ENCODE measurements at regions of chr19 and their contacts with region 1.

Region 1: GRCh38 chr19:3984908-3985642 is at the start of gene EEF2:
- DNase-seq: peak in 1 of 2 donors; percentile 92
- H3K4me3 ChIP-seq: peak within 1 kb of the TSS; percentile 89 to 96
- H3K27ac ChIP-seq: peak within 1 kb of the TSS; percentile 98
- H3K4me1 ChIP-seq: peaks cover 8 to 27% of the 10 kb centered on the region in 2 donors
- H3K27me3 ChIP-seq: no peaks in the 10 kb centered on the region
- CTCF ChIP-seq: no peak
- total RNA-seq, gene EEF2: 1,544 TPM

Region 2: GRCh38 chr19:3970808-3971598 is 14.1 kb before region 1 on chr19 and contains the start of gene DAPK3:
- intact Hi-C with region 1: loop called (anchors 1 kb)
- DNase-seq: peak; percentile 89 to 98
- H3K4me3 ChIP-seq: peak within 1 kb of the TSS; percentile 78 to 98
- H3K27ac ChIP-seq: peak within 1 kb of the TSS; percentile 99 to 100
- H3K4me1 ChIP-seq: peaks cover 28 to 33% of the 10 kb centered on the region in 2 donors
- H3K27me3 ChIP-seq: no peaks in the 10 kb centered on the region
- CTCF ChIP-seq: no peak
- total RNA-seq, gene DAPK3: 135 TPM

Region 3: DNA sequence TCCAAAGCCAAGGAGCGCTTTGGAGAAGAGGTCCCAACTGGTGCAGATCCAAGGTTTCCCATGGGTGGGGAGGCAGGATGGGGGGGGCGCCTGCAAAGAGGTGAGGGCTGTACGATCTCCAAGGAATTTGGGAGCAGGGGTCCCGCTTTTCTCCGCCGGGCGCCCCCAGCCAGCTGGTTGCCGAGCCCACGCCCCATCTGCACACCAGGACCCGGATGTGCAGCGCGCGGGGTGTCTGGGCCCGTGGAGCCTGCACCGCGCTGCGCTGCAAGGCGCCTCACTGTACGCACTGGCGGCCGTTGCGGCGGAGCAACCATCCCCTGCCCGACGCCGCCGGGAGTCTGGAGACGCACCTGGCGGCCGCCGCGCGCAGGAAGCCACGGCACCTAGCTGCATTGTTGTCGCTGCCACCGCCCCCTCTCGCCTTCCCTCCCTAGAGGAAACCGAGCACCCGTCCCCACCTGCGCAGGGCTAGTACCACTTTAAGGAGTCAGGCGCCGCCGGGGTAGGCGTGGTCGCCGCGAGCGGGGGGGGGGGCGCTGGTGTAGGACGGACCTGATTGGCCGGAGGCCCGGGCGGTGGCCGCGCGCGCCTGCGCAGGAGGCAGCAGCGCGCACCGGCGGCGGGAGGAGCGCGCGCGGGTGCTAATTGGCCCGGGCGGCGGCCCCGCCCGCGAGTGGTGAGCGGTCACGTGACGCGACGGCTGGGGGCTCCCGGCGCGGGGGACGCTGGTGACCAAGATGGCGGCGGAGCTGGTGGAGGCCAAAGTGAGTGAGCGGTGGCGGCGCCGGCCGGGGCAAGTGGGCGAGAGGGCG is 22.2 kb after region 1 on chr19 and contains the start of gene PIAS4:
- intact Hi-C with region 1: loop called (anchors 1 kb)
- DNase-seq: peak; percentile 86 to 97
- H3K4me3 ChIP-seq: peak within 1 kb of the TSS; percentile 95 to 96
- H3K27ac ChIP-seq: peak within 1 kb of the TSS; percentile 66 to 67
- H3K4me1 ChIP-seq: peaks cover 5 to 29% of the 10 kb centered on the region in 2 donors
- H3K27me3 ChIP-seq: no peaks in the 10 kb centered on the region
- CTCF ChIP-seq: peak in 1 of 3 experiments; percentile 19
- total RNA-seq, gene PIAS4: 30.8 TPM

Region 4: GRCh38 chr19:4065430-4066175 is 80.5 kb after region 1 on chr19:
- intact Hi-C with region 1: loop called (anchors 1 kb)
- DNase-seq: peak; percentile 77 to 98
- H3K4me3 ChIP-seq: peak overlapping the region; percentile 92 to 98
- H3K27ac ChIP-seq: peak overlapping the region; percentile 78 to 90
- H3K4me1 ChIP-seq: peaks cover 31 to 34% of the 10 kb centered on the region in 2 donors
- H3K27me3 ChIP-seq: no peaks in the 10 kb centered on the region
- CTCF ChIP-seq: no peak

Region 5: GRCh38 chr19:4123615-4124568 is 138.8 kb after region 1 on chr19 and contains the start of gene MAP2K2:
- intact Hi-C with region 1: loop called (anchors 5 kb)
- DNase-seq: peak; percentile 59 to 95
- H3K4me3 ChIP-seq: peak within 1 kb of the TSS; percentile 85 to 99
- H3K27ac ChIP-seq: peak within 1 kb of the TSS; percentile 52 to 63
- H3K4me1 ChIP-seq: peaks cover 12 to 16% of the 10 kb centered on the region in 2 donors
- H3K27me3 ChIP-seq: no peaks in the 10 kb centered on the region
- CTCF ChIP-seq: peak in 1 of 3 experiments; percentile 19
- total RNA-seq, gene MAP2K2: 155 TPM

Region 6: DNA sequence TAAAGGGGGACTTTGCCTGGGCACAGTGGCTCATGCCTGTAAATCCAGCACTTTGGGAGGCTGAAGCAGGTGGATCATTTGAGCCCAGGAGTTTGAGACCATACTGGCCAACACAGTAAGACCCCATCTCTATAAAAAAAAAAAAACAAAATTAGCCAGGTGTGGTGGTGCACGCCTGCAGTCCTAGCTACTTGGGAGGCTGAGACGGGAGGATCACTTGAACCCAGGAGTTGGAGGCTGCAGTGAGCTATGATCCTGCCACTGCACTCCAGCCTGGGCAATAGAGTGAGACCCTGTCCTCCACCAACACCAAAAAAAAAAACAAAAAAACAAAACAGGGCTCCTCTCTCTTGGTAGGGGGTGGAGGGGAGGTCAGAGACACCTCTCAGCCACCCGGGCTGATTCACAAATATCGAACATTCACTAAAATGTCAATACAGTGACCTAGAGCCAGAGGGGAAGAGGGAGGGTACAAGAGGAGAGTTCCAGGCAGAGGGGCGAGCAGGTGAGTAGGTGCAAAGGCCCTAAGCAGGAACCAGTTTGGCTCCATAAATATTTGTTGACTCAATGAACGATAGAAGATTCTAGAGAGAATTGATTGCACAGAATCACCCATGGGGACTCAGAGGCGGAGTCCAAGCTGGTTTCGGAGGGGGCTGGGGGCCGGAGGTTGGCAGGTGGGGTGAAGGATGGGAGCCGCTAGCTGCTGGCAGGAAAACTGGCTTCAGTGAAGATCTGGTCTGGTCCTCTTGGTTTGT is 167.3 kb after region 1 on chr19:
- intact Hi-C with region 1: no loop called
- DNase-seq: no peak
- H3K4me3 ChIP-seq: no peak overlapping the region
- H3K27ac ChIP-seq: no peak overlapping the region
- H3K4me1 ChIP-seq: no peaks in the 10 kb centered on the region
- H3K27me3 ChIP-seq: no peaks in the 10 kb centered on the region
- CTCF ChIP-seq: no peak

Region 7: GRCh38 chr19:4182084-4182810 is 197.2 kb after region 1 on chr19 and contains the starts of genes ANKRD24 and SIRT6:
- intact Hi-C with region 1: loop called (anchors 5 kb)
- DNase-seq: peak; percentile 78 to 97
- H3K4me3 ChIP-seq: peak within 1 kb of the TSS; percentile 75 to 96
- H3K27ac ChIP-seq: peak within 1 kb of the TSS; percentile 65 to 74
- H3K4me1 ChIP-seq: peaks cover 12 to 14% of the 10 kb centered on the region in 2 donors
- H3K27me3 ChIP-seq: no peaks in the 10 kb centered on the region
- CTCF ChIP-seq: no peak
- total RNA-seq, gene ANKRD24: not detected
- total RNA-seq, gene SIRT6: 5.9 TPM

Region 8: GRCh38 chr19:4208385-4209094 is 223.5 kb after region 1 on chr19:
- intact Hi-C with region 1: loop called (anchors 1 kb)
- DNase-seq: no peak
- H3K4me3 ChIP-seq: no peak overlapping the region
- H3K27ac ChIP-seq: no peak overlapping the region
- H3K4me1 ChIP-seq: no peaks in the 10 kb centered on the region
- H3K27me3 ChIP-seq: no peaks in the 10 kb centered on the region
- CTCF ChIP-seq: no peak

Region 9: DNA sequence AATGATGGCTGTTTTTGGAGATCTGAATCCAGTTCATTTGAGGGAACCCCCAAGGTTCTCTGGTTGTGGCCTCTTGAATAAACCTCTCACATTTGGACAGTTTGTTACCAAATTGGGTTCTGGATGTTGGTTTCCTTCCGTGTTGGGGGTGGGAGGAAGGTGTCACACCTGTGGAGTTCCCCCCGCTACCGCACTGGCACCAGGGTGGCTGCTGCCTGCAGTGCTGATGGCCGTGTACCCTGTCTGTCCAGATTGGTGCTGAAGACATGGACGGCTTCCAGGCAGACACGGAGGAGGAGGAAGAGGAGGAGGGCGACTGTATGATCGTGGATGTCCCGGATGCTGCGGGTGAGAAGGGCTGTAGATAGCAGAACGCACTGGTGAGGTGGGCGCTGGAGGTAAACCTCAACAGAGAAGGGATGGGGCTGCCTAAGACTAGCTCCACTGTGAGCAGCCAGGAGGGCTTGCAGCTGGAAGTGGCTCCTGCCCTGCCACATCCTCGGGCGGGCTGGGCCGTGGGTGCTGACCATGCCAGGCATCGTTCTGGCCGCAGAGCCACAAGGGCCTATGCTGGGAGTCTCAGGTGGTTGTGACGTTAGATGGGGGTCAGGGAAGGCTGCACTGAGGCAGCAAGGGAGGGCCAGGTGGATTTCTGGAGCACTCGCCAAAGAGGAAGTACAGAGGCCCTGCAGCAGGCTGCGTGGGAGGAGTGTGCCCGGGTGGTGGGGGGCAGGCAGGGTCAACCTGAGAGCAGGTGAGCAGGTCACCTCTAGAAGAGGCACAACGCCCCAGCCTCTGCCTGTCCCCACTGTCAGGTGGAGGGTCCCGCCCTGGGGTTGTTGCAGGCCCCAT is 457.1 kb after region 1 on chr19:
- intact Hi-C with region 1: no loop called
- DNase-seq: no peak
- H3K4me3 ChIP-seq: no peak overlapping the region
- H3K27ac ChIP-seq: no peak overlapping the region
- H3K4me1 ChIP-seq: no peaks in the 10 kb centered on the region
- H3K27me3 ChIP-seq: no peaks in the 10 kb centered on the region
- CTCF ChIP-seq: no peak